Sigmoid colon (tissue), 7 donors: ENCODE measurements at regions of chr11 and their contacts with region 1.

Region 1: DNA sequence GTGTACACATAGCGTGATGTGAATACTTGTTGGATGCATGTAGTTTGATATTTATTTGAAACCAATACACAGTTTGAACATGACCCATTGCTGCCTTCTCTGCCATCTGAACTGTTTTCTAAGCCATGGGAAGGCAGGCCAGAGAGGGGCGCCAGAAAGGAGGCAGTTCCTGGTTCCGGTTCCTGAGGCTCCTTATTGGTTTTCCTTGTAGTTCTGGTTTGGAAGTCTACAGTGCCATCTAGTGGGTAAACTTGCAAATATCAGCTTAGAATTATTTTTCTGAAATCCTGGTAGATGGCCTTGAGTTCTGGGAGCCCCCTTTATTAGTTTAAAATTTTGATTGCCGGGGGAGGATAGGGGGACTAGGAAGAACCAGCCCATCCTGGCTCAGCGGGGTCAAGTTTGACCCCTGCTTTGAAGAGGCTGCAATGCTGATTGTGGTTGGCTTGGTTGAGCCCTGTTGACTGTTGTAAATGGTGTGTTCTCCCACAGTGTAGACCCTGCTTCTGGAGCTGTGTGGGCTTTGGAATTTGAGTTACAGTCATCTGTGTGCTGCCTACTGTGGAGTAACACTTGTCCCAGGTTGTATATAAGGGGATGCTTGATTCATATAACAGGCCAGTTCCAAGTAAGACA is 48.4 kb downstream of the GRAMD1B start:
- DNase-seq: peak; percentile 68
- H3K4me3 ChIP-seq: no peak overlapping the region
- H3K27ac ChIP-seq: no peak overlapping the region
- H3K4me1 ChIP-seq: no peaks in the 10 kb centered on the region
- H3K27me3 ChIP-seq: no peaks in the 10 kb centered on the region
- CTCF ChIP-seq: peak; percentile 38 to 74 (median 64)
- EP300 ChIP-seq: no peak
- POLR2A ChIP-seq: no peak

Region 2: GRCh38 chr11:122917311-122917710 is 561.2 kb before region 1 on chr11:
- intact Hi-C with region 1: no loop called
- DNase-seq: peak; percentile 80
- H3K4me3 ChIP-seq: no peak overlapping the region
- H3K27ac ChIP-seq: no peak overlapping the region
- H3K4me1 ChIP-seq: no peaks in the 10 kb centered on the region
- H3K27me3 ChIP-seq: no peaks in the 10 kb centered on the region
- CTCF ChIP-seq: no peak
- EP300 ChIP-seq: no peak
- POLR2A ChIP-seq: no peak

Region 3: GRCh38 chr11:123103326-123103980 is 375.0 kb before region 1 on chr11:
- intact Hi-C with region 1: loop called (anchors 10 kb)
- DNase-seq: peak; percentile 83
- H3K4me3 ChIP-seq: no peak overlapping the region
- H3K27ac ChIP-seq: peak overlapping the region; percentile 66 to 78 (median 70)
- H3K4me1 ChIP-seq: peaks cover 0 to 76% (median 72%) of the 10 kb centered on the region in 4 donors
- H3K27me3 ChIP-seq: no peaks in the 10 kb centered on the region
- CTCF ChIP-seq: peak; percentile 39 to 59 (median 48)
- EP300 ChIP-seq: peak in 1 of 4 donors; percentile 12
- POLR2A ChIP-seq: no peak

Region 4: DNA sequence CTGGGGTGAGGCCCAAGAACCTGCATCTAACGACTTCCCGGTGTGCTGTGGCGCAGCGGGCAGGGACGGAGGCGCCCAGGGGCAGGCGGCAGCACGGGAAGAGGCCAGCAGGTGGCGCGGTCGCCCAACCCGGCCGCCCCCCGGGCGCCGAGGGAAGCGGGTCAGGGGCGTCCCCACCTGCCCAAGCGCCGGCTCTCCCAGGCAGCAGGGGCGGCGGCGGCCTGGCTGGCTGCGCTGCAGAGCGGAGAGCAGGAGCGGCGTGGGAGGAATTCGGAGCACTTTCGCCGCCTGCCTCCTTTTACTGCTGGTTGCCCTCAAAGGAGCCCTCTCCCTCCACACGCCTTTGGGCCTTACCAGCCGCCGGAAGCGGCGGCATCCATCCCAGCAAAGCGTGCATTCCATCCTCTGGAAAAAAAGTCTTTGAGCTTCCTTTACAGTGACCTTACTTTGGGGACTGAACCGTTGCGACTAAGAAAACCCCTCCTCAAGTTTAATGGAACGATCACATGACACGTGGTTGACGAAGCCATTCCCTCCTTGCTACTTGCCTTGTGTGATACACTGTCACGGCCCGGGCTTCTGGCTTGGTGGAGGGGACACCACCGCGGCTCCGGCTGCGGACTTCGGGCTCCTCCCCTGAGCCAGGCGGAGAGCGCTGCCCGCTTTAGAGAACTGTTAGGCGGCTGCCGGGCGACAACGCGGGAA is 176.6 kb before region 1 on chr11:
- intact Hi-C with region 1: loop called (anchors 1 kb)
- DNase-seq: peak; percentile 69
- H3K4me3 ChIP-seq: peak overlapping the region in 3 of 4 donors; percentile 36 to 50 (median 50)
- H3K27ac ChIP-seq: peak overlapping the region in 1 of 4 donors; percentile 22
- H3K4me1 ChIP-seq: peaks cover 0 to 13% (median 12%) of the 10 kb centered on the region in 4 donors
- H3K27me3 ChIP-seq: peaks cover 0 to 24% (median 0%) of the 10 kb centered on the region in 3 donors
- CTCF ChIP-seq: peak; percentile 32 to 96 (median 48)
- EP300 ChIP-seq: no peak
- POLR2A ChIP-seq: no peak

Region 5: DNA sequence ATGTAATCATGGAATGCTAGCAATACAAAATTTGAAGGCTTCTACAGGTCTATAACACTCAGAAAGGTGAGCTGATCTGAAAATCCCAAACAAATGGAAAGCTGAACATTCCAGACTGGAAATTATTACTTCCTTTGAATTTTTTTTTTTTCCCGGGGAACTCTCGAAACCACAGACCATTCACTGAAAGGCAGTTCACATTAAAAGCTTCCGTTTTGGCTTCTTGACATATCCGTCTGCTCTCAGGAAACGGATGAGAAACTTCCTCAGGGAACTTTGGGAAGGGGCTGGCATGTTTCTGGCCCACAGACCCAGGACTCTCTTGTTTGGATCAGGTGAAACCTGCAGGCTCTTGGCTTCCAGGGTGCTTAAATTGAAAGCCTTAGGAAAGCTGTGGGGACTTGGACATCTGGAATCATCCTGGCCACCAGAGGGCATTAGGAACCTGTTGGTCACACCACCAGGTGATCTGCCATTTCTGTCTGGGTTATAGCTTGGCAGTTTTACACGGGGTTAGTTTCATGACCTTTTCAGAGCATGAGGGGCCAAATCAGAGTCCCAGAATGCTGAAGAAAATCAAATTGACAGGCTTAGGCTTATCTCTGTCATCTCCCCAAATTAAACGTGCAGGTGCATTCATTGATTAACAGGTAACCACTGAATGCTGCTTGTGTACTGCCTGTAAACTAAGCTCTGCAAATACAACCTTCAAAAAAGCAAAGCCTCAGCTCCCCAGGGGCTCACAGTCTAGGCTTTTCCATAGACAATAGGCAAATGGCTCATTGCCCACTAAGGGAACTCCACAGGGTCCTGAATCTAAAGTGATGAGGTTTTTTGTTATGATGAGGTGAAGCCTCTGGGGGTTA is 71.1 kb before region 1 on chr11:
- intact Hi-C with region 1: loop called (anchors 10 kb)
- DNase-seq: no peak
- H3K4me3 ChIP-seq: no peak overlapping the region
- H3K27ac ChIP-seq: no peak overlapping the region
- H3K4me1 ChIP-seq: no peaks in the 10 kb centered on the region
- H3K27me3 ChIP-seq: peaks cover 0 to 18% (median 7%) of the 10 kb centered on the region in 3 donors
- CTCF ChIP-seq: peak in 3 of 4 experiments; percentile 27 to 39 (median 37)
- EP300 ChIP-seq: no peak
- POLR2A ChIP-seq: no peak